Activated T-helper 2 cell treated with anti-CD3 and anti-CD28 coated beads, Interferon-gamma antibody, Interleukin-2, Interleukin-4, amounts not matched to agents 10 μg/mL and 5 μg/mL and 100 μg/mL, durations not matched to agents 14 hours and 24 hours and 36 hours (primary cell): ENCODE measurements at regions of chr11 and their contacts with region 1.

Region 1: DNA sequence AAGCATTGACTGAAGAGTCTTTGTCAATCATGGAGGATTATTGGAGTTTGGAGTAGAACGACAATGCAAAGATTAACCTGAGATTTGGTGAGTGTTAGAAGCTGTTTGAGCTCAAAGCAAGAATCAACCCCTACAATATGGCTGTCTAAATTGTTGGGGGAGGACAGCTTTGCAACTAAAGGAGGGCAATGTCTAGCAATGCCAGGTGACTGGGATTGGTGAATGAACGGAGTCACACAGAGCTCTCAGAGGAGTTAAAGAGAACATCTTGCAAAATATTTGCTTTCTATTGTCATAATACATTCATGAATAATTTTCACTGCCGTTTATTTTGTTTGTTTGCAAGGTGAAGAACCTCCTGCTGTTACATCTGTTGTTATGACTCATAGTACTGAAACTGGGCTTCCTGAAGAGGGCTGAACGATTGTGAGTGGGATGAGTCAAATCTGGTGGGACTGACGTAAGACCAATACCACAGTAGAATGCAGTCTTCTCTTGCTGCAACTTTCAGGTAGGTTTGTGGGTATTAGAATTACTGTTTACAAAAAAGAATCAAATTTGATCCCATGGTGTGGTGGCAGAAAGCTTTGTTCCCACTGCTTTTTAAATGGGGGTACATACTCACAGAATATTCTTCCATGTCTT is 281.9 kb downstream of the CADM1 start:
- DNase-seq: peak; percentile 53
- H3K4me3 Mint-ChIP-seq: peak overlapping the region; percentile 2
- H3K27ac Mint-ChIP-seq: peak overlapping the region; percentile 83
- H3K4me1 Mint-ChIP-seq: peaks cover 63% of the 10 kb centered on the region
- H3K27me3 Mint-ChIP-seq: peaks cover 12% of the 10 kb centered on the region

Region 2: GRCh38 chr11:115193914-115194801 is 28.2 kb before region 1 on chr11:
- intact Hi-C with region 1: loop called (anchors 1 kb)
- DNase-seq: no peak
- H3K4me3 Mint-ChIP-seq: peak overlapping the region; percentile 42
- H3K27ac Mint-ChIP-seq: peak overlapping the region; percentile 86
- H3K4me1 Mint-ChIP-seq: peaks cover 26% of the 10 kb centered on the region
- H3K27me3 Mint-ChIP-seq: peaks cover 15% of the 10 kb centered on the region

Region 3: GRCh38 chr11:115201111-115201792 is 21.1 kb before region 1 on chr11:
- intact Hi-C with region 1: loop called (anchors 1 kb)
- DNase-seq: no peak
- H3K4me3 Mint-ChIP-seq: no peak overlapping the region
- H3K27ac Mint-ChIP-seq: peak overlapping the region; percentile 1
- H3K4me1 Mint-ChIP-seq: peaks cover 35% of the 10 kb centered on the region
- H3K27me3 Mint-ChIP-seq: peaks cover 12% of the 10 kb centered on the region

Region 4: GRCh38 chr11:115300660-115301428 is 78.5 kb after region 1 on chr11:
- intact Hi-C with region 1: loop called (anchors 2 kb)
- DNase-seq: no peak
- H3K4me3 Mint-ChIP-seq: no peak overlapping the region
- H3K27ac Mint-ChIP-seq: no peak overlapping the region
- H3K4me1 Mint-ChIP-seq: no peaks in the 10 kb centered on the region
- H3K27me3 Mint-ChIP-seq: peaks cover 4% of the 10 kb centered on the region

Region 5: DNA sequence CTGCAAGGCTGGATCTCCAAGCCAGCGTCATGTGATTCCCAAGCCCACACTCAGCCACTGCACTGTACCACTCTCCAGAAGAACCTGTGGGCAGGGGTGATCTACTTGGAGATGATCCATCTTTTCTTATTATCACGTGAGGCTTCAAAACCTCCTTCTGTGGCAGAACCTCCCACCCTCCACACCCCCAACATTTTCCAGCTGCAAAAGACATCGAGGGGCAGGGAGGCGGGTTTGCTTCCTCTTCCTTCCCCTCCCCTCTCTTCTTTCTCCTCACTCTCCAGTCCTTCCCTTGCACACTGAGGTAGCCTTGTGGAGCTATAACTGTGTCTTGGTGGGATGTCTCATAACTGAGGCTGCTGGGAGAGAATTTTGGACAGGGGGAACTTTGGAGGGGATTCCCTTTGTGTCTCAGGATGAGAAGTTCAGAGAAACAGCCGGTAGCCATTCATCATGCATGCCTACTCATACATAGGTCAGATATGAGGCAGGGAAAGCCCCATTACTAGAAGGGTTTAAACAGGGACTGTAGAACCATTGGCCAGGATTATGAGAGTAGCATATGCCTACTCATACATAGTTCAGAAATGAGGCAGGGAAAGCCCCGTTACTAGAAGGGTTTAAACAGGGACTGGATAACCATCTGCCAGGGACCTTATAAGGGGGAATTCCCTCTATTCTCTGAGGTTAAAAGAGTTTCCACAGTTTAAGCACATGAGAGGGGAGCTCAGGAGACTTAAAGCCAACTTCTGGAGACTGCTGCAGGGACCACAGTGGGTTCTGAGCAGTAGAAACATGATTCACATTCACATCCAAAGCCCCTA is 702.6 kb after region 1 on chr11:
- intact Hi-C with region 1: loop called (anchors 1 kb)
- DNase-seq: peak; percentile 11
- H3K4me3 Mint-ChIP-seq: no peak overlapping the region
- H3K27ac Mint-ChIP-seq: peak overlapping the region; percentile 90
- H3K4me1 Mint-ChIP-seq: peaks cover 53% of the 10 kb centered on the region
- H3K27me3 Mint-ChIP-seq: no peaks in the 10 kb centered on the region